Natural killer cell (primary cell): ENCODE measurements at regions of chr10 and their contacts with region 1.

Region 1: GRCh38 chr10:97292097-97292862 is at the start of gene ARHGAP19:
- DNase-seq: peak; percentile 86 to 97
- ATAC-seq: peak; percentile 98 to 100 (median 99)
- H3K4me3 ChIP-seq: peak within 1 kb of the TSS; percentile 91
- H3K4me3 Mint-ChIP-seq: peak within 1 kb of the TSS; percentile 90
- H3K27ac ChIP-seq: peak within 1 kb of the TSS; percentile 83
- H3K27ac Mint-ChIP-seq: peak within 1 kb of the TSS; percentile 81 to 83
- H3K4me1 ChIP-seq: peaks cover 10% of the 10 kb centered on the region
- H3K4me1 Mint-ChIP-seq: peaks cover 22 to 24% of the 10 kb centered on the region in 2 donors
- H3K27me3 ChIP-seq: no peaks in the 10 kb centered on the region
- H3K27me3 Mint-ChIP-seq: no peaks in the 10 kb centered on the region
- CTCF ChIP-seq: no peak
- total RNA-seq, gene ARHGAP19: 22.6 to 23.3 (median 22.7) TPM

Region 2: DNA sequence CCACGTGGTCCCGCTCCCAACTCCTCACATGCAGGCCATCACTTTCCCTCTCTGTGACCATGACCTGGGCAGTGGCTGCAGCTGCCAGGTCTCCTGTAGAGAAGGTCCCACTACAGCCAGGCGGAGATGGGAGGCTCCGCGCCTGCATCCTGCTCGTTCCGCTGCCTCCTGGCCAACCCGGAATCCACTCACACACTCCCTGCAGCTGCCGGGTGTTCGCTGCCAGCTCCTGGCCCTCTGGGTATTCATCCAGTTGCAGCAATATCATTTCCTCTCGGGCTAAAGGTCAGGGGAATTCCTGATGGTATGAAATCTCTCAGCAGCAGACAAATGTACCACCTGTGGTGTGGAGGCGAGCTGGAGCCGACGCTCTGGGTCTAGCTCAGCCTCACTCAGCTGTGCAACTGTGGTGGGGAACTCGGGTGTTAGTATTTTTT is 844.2 kb before region 1 on chr10:
- intact Hi-C with region 1: no loop called
- DNase-seq: no peak
- ATAC-seq: no peak
- H3K4me3 ChIP-seq: no peak overlapping the region
- H3K4me3 Mint-ChIP-seq: no peak overlapping the region
- H3K27ac ChIP-seq: no peak overlapping the region
- H3K27ac Mint-ChIP-seq: no peak overlapping the region
- H3K4me1 ChIP-seq: no peaks in the 10 kb centered on the region
- H3K4me1 Mint-ChIP-seq: no peaks in the 10 kb centered on the region
- H3K27me3 ChIP-seq: no peaks in the 10 kb centered on the region
- H3K27me3 Mint-ChIP-seq: peaks cover 18 to 19% of the 10 kb centered on the region in 2 donors
- CTCF ChIP-seq: no peak

Region 3: DNA sequence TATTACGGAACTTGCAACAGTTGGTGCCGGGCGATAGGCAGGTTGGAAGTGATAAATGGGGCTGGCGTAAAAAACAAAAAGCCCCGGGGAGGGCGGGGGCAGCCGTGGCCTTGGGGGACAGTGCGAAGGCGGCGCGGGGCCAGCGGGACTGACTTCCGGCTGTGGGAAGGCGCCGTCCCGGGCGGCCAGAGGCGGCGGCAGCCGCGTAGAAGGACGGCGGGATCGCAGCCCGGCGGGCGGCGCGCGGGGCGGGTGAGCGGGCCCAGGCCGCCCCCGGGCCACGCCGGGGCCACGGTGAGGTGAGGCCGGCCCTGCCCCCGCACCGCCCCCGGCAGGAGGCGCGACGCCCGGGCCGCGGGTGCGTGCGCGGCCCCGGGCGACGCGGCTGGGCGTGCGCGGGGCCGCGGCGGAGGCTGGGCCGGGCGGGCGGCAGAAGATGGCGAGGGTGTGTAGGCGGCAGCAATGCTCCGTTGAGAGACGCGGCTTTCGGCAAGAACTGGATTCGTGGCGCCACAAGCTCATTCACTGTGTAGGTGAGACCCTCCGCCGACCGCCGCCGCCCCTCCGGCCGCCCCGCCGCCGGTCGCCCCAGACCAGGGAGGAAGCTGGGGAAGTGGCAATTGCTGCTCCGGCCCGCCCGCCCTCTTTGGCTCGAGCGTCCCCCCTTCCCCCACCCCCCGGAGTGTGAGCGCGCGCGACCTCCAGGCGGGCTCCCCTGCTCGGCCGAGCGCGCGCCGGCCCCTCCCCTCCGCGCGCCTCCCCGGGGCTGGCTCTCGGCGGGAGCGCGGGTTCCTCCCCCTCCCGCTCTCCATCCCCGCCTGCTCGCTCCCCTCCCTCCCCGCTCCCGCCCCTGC is 460.2 kb before region 1 on chr10 and contains the start of gene LCOR:
- intact Hi-C with region 1: loop called (anchors 5 kb)
- DNase-seq: peak; percentile 82 to 92
- ATAC-seq: peak; percentile 69 to 86 (median 72)
- H3K4me3 ChIP-seq: peak within 1 kb of the TSS; percentile 73
- H3K4me3 Mint-ChIP-seq: peak within 1 kb of the TSS; percentile 98
- H3K27ac ChIP-seq: peak within 1 kb of the TSS; percentile 84
- H3K27ac Mint-ChIP-seq: peak within 1 kb of the TSS; percentile 99
- H3K4me1 ChIP-seq: peaks cover 14% of the 10 kb centered on the region
- H3K4me1 Mint-ChIP-seq: peaks cover 45% of the 10 kb centered on the region in 2 donors
- H3K27me3 ChIP-seq: no peaks in the 10 kb centered on the region
- H3K27me3 Mint-ChIP-seq: no peaks in the 10 kb centered on the region
- CTCF ChIP-seq: no peak
- total RNA-seq, gene LCOR: 68.5 to 92.4 (median 87.7) TPM

Region 4: GRCh38 chr10:97109547-97109946 is 182.7 kb before region 1 on chr10:
- intact Hi-C with region 1: no loop called
- DNase-seq: no peak
- ATAC-seq: no peak
- H3K4me3 ChIP-seq: no peak overlapping the region
- H3K4me3 Mint-ChIP-seq: no peak overlapping the region
- H3K27ac ChIP-seq: no peak overlapping the region
- H3K27ac Mint-ChIP-seq: no peak overlapping the region
- H3K4me1 ChIP-seq: peaks cover 13% of the 10 kb centered on the region
- H3K4me1 Mint-ChIP-seq: peaks cover 0 to 15% of the 10 kb centered on the region in 2 donors
- H3K27me3 ChIP-seq: no peaks in the 10 kb centered on the region
- H3K27me3 Mint-ChIP-seq: peaks cover 7 to 19% of the 10 kb centered on the region in 2 donors
- CTCF ChIP-seq: no peak

Region 5: DNA sequence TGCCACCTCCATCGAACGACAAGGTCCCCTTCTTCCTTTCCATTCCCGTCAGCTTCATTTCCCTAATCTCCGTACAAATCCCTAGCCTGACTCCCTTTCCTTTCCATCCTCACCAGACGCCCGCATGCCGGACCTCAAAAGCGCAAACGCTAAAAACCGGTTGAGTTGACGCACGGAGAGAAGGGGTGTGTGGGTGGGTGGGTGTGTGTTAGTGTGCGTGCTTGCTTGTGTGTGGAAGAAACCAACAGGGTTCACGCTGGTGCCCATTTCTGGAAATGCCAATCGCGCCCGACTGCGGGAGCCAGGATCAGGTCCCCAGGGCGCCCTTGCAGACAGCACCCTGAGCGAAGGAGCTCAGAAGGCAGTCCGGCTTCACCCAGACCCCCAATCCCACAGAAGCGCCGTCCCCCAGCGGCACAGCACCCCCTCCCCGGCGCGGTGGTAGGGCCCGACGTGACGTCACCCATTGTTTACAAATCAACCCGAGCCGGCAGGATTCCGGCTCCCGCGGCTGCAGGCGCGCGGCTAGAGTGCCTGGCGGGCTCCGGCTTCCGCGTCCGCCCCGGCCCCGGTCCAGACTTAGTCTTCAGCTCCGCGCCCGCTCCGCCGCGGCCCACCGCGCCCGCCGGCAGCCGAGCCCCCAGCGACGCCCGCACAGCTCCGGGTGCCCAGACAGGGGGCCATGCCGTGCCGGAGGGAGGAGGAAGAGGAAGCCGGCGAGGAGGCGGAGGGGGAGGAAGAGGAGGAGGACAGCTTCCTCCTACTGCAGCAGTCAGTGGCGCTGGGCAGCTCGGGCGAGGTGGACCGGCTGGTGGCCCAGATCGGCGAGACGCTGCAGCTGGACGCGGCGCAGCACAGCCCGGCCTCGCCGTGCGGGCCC is 26.7 kb after region 1 on chr10 and contains the start of gene FRAT1:
- intact Hi-C with region 1: loop called (anchors 1 kb)
- DNase-seq: peak; percentile 93 to 95
- ATAC-seq: peak; percentile 77 to 89 (median 79)
- H3K4me3 ChIP-seq: peak within 1 kb of the TSS; percentile 64
- H3K4me3 Mint-ChIP-seq: peak within 1 kb of the TSS; percentile 98
- H3K27ac ChIP-seq: peak within 1 kb of the TSS; percentile 100
- H3K27ac Mint-ChIP-seq: peak within 1 kb of the TSS; percentile 92 to 99
- H3K4me1 ChIP-seq: peaks cover 33% of the 10 kb centered on the region
- H3K4me1 Mint-ChIP-seq: peaks cover 33% of the 10 kb centered on the region in 2 donors
- H3K27me3 ChIP-seq: no peaks in the 10 kb centered on the region
- H3K27me3 Mint-ChIP-seq: no peaks in the 10 kb centered on the region
- CTCF ChIP-seq: no peak
- total RNA-seq, gene FRAT1: 26.0 to 45.0 (median 32.1) TPM

Region 6: GRCh38 chr10:97334370-97335175 is 42.3 kb after region 1 on chr10 and contains the start of gene FRAT2:
- intact Hi-C with region 1: loop called (anchors 2 kb)
- DNase-seq: peak; percentile 89 to 94
- ATAC-seq: peak; percentile 89 to 95 (median 91)
- H3K4me3 ChIP-seq: peak within 1 kb of the TSS; percentile 69
- H3K4me3 Mint-ChIP-seq: peak within 1 kb of the TSS; percentile 95
- H3K27ac ChIP-seq: peak within 1 kb of the TSS; percentile 100
- H3K27ac Mint-ChIP-seq: peak within 1 kb of the TSS; percentile 85
- H3K4me1 ChIP-seq: peaks cover 32% of the 10 kb centered on the region
- H3K4me1 Mint-ChIP-seq: peaks cover 24 to 35% of the 10 kb centered on the region in 2 donors
- H3K27me3 ChIP-seq: peaks cover 2% of the 10 kb centered on the region
- H3K27me3 Mint-ChIP-seq: peaks cover 0 to 2% of the 10 kb centered on the region in 2 donors
- CTCF ChIP-seq: no peak
- total RNA-seq, gene FRAT2: 18.7 to 23.4 (median 22.2) TPM

Region 7: GRCh38 chr10:97498076-97498840 is 206.0 kb after region 1 on chr10 and contains the start of gene MMS19:
- intact Hi-C with region 1: loop called (anchors 1 kb)
- DNase-seq: peak; percentile 99 to 100
- ATAC-seq: peak; percentile 87 to 95 (median 89)
- H3K4me3 ChIP-seq: peak within 1 kb of the TSS; percentile 83
- H3K4me3 Mint-ChIP-seq: peak within 1 kb of the TSS; percentile 98
- H3K27ac ChIP-seq: peak within 1 kb of the TSS; percentile 72
- H3K27ac Mint-ChIP-seq: peak within 1 kb of the TSS; percentile 91 to 98
- H3K4me1 ChIP-seq: peaks cover 7% of the 10 kb centered on the region
- H3K4me1 Mint-ChIP-seq: peaks cover 33 to 38% of the 10 kb centered on the region in 2 donors
- H3K27me3 ChIP-seq: peaks cover 12% of the 10 kb centered on the region
- H3K27me3 Mint-ChIP-seq: peaks cover 23 to 24% of the 10 kb centered on the region in 2 donors
- CTCF ChIP-seq: no peak
- total RNA-seq, gene MMS19: 53.8 to 68.4 (median 61.7) TPM

Region 8: GRCh38 chr10:97640174-97640867 is 348.0 kb after region 1 on chr10 and contains the start of gene PI4K2A:
- intact Hi-C with region 1: loop called (anchors 10 kb)
- DNase-seq: peak; percentile 98 to 100
- ATAC-seq: peak; percentile 94 to 99 (median 96)
- H3K4me3 ChIP-seq: peak within 1 kb of the TSS; percentile 62
- H3K4me3 Mint-ChIP-seq: peak within 1 kb of the TSS; percentile 99
- H3K27ac ChIP-seq: peak within 1 kb of the TSS; percentile 57
- H3K27ac Mint-ChIP-seq: peak within 1 kb of the TSS; percentile 90
- H3K4me1 ChIP-seq: peaks cover 21% of the 10 kb centered on the region
- H3K4me1 Mint-ChIP-seq: peaks cover 29 to 34% of the 10 kb centered on the region in 2 donors
- H3K27me3 ChIP-seq: no peaks in the 10 kb centered on the region
- H3K27me3 Mint-ChIP-seq: peaks cover 0 to 2% of the 10 kb centered on the region in 2 donors
- CTCF ChIP-seq: no peak
- total RNA-seq, gene PI4K2A: 41.3 to 66.1 (median 60.0) TPM